CD4-positive, alpha-beta memory T cell (primary cell): ENCODE measurements at regions of chr19 and their contacts with region 1.

Region 1: GRCh38 chr19:16070366-16070990 is 5.8 kb upstream of the TPM4 start:
- DNase-seq: peak; percentile 87 to 98 (median 94)
- H3K4me3 ChIP-seq: peak overlapping the region in 1 of 2 donors; percentile 46
- H3K4me3 Mint-ChIP-seq: peak overlapping the region in 3 of 8 donors; percentile 60 to 80 (median 77)
- H3K27ac ChIP-seq: peak overlapping the region; percentile 89
- H3K27ac Mint-ChIP-seq: no peak overlapping the region
- H3K4me1 ChIP-seq: peaks cover 78% of the 10 kb centered on the region
- H3K4me1 Mint-ChIP-seq: peaks cover 25 to 46% (median 38%) of the 10 kb centered on the region in 4 donors
- H3K27me3 ChIP-seq: no peaks in the 10 kb centered on the region
- H3K27me3 Mint-ChIP-seq: no peaks in the 10 kb centered on the region

Region 2: GRCh38 chr19:15511671-15512424 is 558.6 kb before region 1 on chr19:
- CTCF ChIA-PET with region 1: no interaction called
- POLR2A ChIA-PET with region 1: no interaction called
- intact Hi-C with region 1: no loop called
- DNase-seq: no peak
- H3K4me3 ChIP-seq: no peak overlapping the region
- H3K4me3 Mint-ChIP-seq: no peak overlapping the region
- H3K27ac ChIP-seq: no peak overlapping the region
- H3K27ac Mint-ChIP-seq: no peak overlapping the region
- H3K4me1 ChIP-seq: peaks cover 36% of the 10 kb centered on the region
- H3K4me1 Mint-ChIP-seq: peaks cover 23 to 51% (median 29%) of the 10 kb centered on the region in 4 donors
- H3K27me3 ChIP-seq: peaks cover 5% of the 10 kb centered on the region
- H3K27me3 Mint-ChIP-seq: peaks cover 1 to 3% of the 10 kb centered on the region in 2 donors

Region 3: GRCh38 chr19:15836595-15837337 is 233.7 kb before region 1 on chr19:
- CTCF ChIA-PET with region 1: no interaction called
- POLR2A ChIA-PET with region 1: interaction called, 13 read pairs
- intact Hi-C with region 1: loop called (anchors 5 kb)
- DNase-seq: peak; percentile 95 to 98 (median 96)
- H3K4me3 ChIP-seq: peak overlapping the region; percentile 63 to 69
- H3K4me3 Mint-ChIP-seq: peak overlapping the region; percentile 92 to 99 (median 96)
- H3K27ac ChIP-seq: peak overlapping the region; percentile 94
- H3K27ac Mint-ChIP-seq: peak overlapping the region; percentile 89 to 100 (median 98)
- H3K4me1 ChIP-seq: peaks cover 29% of the 10 kb centered on the region
- H3K4me1 Mint-ChIP-seq: peaks cover 17 to 36% (median 26%) of the 10 kb centered on the region in 4 donors
- H3K27me3 ChIP-seq: no peaks in the 10 kb centered on the region
- H3K27me3 Mint-ChIP-seq: no peaks in the 10 kb centered on the region

Region 4: GRCh38 chr19:16088351-16089009 is 18.0 kb after region 1 on chr19:
- CTCF ChIA-PET with region 1: interaction called, 145 read pairs
- POLR2A ChIA-PET with region 1: interaction called, 192 read pairs
- intact Hi-C with region 1: loop called (anchors 1 kb)
- DNase-seq: peak in 1 of 5 donors; percentile 10
- H3K4me3 ChIP-seq: no peak overlapping the region
- H3K4me3 Mint-ChIP-seq: peak overlapping the region in 4 of 8 donors; percentile 15 to 54 (median 34)
- H3K27ac ChIP-seq: no peak overlapping the region
- H3K27ac Mint-ChIP-seq: peak overlapping the region; percentile 61 to 82 (median 72)
- H3K4me1 ChIP-seq: peaks cover 53% of the 10 kb centered on the region
- H3K4me1 Mint-ChIP-seq: peaks cover 27 to 58% (median 36%) of the 10 kb centered on the region in 4 donors
- H3K27me3 ChIP-seq: no peaks in the 10 kb centered on the region
- H3K27me3 Mint-ChIP-seq: no peaks in the 10 kb centered on the region

Region 5: DNA sequence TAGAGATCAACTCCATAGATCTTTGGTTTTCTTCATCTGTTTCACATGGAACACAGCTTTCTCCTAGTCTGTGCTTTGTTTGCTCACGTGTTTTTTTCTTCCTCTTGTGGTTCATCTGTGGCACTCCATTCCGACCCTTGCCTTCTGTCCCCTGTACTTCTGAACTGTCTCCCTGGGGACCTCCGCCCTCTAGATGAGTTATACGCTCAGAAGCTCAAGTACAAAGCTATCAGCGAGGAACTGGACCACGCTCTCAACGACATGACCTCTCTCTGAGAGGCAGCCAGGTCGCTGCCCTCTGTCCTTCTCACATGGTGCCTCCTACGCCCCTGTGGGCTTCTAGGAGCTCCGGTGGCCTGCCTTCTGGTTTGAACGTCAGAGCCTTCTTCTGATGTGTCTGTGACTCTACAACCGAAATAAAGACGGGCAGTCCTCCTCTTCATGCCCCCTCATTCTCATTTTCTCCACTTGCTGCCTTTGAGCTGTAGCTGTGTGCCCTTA is 24.6 kb after region 1 on chr19:
- CTCF ChIA-PET with region 1: interaction called, 13 read pairs
- POLR2A ChIA-PET with region 1: interaction called, 20 read pairs
- intact Hi-C with region 1: no loop called
- DNase-seq: peak in 1 of 5 donors; percentile 37
- H3K4me3 ChIP-seq: no peak overlapping the region
- H3K4me3 Mint-ChIP-seq: peak overlapping the region in 6 of 8 donors; percentile 7 to 63 (median 46)
- H3K27ac ChIP-seq: peak overlapping the region; percentile 10
- H3K27ac Mint-ChIP-seq: peak overlapping the region; percentile 43 to 94 (median 88)
- H3K4me1 ChIP-seq: peaks cover 14% of the 10 kb centered on the region
- H3K4me1 Mint-ChIP-seq: peaks cover 14 to 22% (median 18%) of the 10 kb centered on the region in 4 donors
- H3K27me3 ChIP-seq: no peaks in the 10 kb centered on the region
- H3K27me3 Mint-ChIP-seq: no peaks in the 10 kb centered on the region

Region 6: GRCh38 chr19:16118489-16119033 is 48.1 kb after region 1 on chr19:
- CTCF ChIA-PET with region 1: interaction called, 84 read pairs
- POLR2A ChIA-PET with region 1: interaction called, 49 read pairs
- intact Hi-C with region 1: no loop called
- DNase-seq: no peak
- H3K4me3 ChIP-seq: peak overlapping the region in 1 of 2 donors; percentile 12
- H3K4me3 Mint-ChIP-seq: peak overlapping the region in 7 of 8 donors; percentile 54 to 93 (median 65)
- H3K27ac ChIP-seq: peak overlapping the region; percentile 49
- H3K27ac Mint-ChIP-seq: peak overlapping the region; percentile 80 to 97 (median 94)
- H3K4me1 ChIP-seq: peaks cover 56% of the 10 kb centered on the region
- H3K4me1 Mint-ChIP-seq: peaks cover 28 to 59% (median 48%) of the 10 kb centered on the region in 4 donors
- H3K27me3 ChIP-seq: no peaks in the 10 kb centered on the region
- H3K27me3 Mint-ChIP-seq: no peaks in the 10 kb centered on the region

Region 7: DNA sequence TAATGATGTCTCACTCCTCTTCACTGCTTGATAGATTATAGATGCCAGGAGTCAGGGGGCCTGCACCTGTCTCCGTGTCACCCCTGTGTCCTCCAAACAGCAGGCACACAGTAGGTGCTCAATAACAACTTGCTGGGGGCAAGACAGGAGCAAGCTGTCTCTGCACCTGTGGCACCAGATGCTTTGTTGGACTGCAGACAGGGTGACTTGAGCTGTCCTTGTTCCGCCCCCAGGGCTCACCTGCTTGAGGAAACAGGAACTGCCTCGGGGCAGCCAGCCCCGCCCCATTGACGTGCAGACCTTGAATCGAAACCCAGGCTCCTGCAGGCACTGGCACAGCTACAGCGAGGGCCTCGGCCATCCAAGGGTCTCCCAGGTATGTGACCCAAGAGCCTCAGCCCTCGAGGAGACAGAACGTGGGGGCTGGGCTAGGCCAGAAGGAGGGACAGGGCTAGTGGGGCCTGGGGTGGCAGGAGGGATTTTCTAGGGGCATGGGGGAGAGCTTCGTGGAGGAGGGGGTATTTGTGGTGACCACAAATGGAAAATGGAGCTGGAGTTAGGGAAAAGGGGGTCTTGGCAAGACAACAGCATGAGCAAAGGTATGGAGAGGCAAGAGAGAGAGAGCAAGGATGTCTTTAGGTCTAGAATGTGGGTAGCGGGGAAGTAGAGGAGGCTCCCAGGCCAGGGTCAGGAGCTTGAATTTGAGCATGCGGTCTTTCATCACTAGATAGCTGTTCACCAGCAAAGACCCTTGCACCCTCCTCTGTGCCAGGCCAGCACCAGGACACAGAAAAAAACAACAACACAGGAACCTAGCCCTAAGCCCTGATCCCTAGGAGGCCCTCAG is 73.1 kb after region 1 on chr19 and contains the start of gene HSH2D:
- CTCF ChIA-PET with region 1: interaction called, 14 read pairs
- POLR2A ChIA-PET with region 1: interaction called, 18 read pairs
- intact Hi-C with region 1: no loop called
- DNase-seq: peak; percentile 76 to 87 (median 79)
- H3K4me3 ChIP-seq: peak within 1 kb of the TSS; percentile 74 to 84
- H3K4me3 Mint-ChIP-seq: peak within 1 kb of the TSS; percentile 91 to 97 (median 95)
- H3K27ac ChIP-seq: peak within 1 kb of the TSS; percentile 82
- H3K27ac Mint-ChIP-seq: peak within 1 kb of the TSS; percentile 83 to 99 (median 96)
- H3K4me1 ChIP-seq: peaks cover 42% of the 10 kb centered on the region
- H3K4me1 Mint-ChIP-seq: peaks cover 20 to 51% (median 33%) of the 10 kb centered on the region in 4 donors
- H3K27me3 ChIP-seq: no peaks in the 10 kb centered on the region
- H3K27me3 Mint-ChIP-seq: no peaks in the 10 kb centered on the region
- total RNA-seq, gene HSH2D: 17.8 to 18.8 TPM